Motor neuron (in vitro differentiated cells): ENCODE measurements at regions of chr2 and their contacts with region 1.

Region 1: GRCh38 chr2:25606892-25607291 is 66.5 kb downstream of the DTNB start:
- ATAC-seq: peak in 3 of 8 experiments; percentile 33 to 36 (median 33)
- H3K4me3 ChIP-seq: no peak overlapping the region
- H3K27ac ChIP-seq: no peak overlapping the region
- H3K4me1 ChIP-seq: peaks cover 0 to 4% of the 10 kb centered on the region in 2 donors

Region 2: DNA sequence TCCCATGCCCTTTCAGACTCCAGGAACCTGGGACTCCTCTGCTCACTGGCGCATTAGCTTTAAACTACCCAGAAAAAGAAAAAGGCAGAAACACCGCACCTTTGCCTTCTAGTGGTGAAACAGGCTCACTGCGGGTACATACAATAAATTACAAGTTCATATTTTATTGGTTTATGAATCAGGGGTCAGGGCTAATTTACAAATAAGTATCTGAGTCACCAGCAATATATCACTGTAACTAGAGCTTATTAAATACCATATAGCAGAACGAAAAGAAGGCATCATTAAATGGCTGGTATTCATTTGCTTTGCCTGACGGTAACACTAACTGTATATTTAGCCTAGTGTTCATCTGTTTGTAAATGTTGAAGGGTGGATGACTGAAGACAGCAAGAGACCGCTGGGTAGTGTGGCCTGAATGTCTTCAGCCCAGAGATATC is 93.3 kb after region 1 on chr2:
- in situ Hi-C with region 1: loop called in 1 of 9 experiments (anchors 25 kb)
- ATAC-seq: peak; percentile 66 to 89 (median 70)
- H3K4me3 ChIP-seq: no peak overlapping the region
- H3K27ac ChIP-seq: no peak overlapping the region
- H3K4me1 ChIP-seq: peaks cover 0 to 14% of the 10 kb centered on the region in 2 donors